Dorsolateral prefrontal cortex (tissue), 120 donors: ENCODE measurements at regions of chr1 and their contacts with region 1.

Region 1: GRCh38 chr1:233518349-233518748 is 95.6 kb upstream of the KCNK1 start:
- DNase-seq: peak in 2 of 10 donors; percentile 38 to 55
- H3K4me3 ChIP-seq: no peak overlapping the region
- H3K27ac ChIP-seq: no peak overlapping the region
- H3K27me3 ChIP-seq: no peaks in the 10 kb centered on the region
- CTCF ChIP-seq: peak; percentile 40 to 80 (median 66)

Region 2: DNA sequence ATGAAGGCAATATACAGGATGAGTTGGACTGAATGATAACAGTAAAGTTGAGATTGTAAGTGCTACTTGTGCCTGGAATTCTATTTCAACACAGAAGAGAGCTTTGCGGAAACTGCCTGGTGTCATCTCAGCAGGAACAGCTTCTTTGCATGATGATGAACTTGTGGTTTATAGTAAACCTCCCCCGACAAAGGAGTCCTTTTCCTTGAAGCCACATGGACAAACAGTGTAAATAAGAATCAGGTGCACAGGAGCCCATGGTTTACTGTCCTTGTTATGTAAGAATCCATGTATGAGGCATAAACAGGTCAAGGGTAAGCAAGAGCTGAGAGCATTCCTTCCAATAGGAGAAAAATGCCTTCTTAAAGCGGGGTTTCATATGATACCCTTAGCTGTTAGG is 289.1 kb before region 1 on chr1:
- intact Hi-C with region 1: no loop called
- DNase-seq: no peak
- H3K4me3 ChIP-seq: no peak overlapping the region
- H3K27ac ChIP-seq: no peak overlapping the region
- H3K27me3 ChIP-seq: no peaks in the 10 kb centered on the region
- CTCF ChIP-seq: no peak

Region 3: GRCh38 chr1:233613252-233614174 is 95.2 kb after region 1 on chr1 and contains the start of gene KCNK1:
- intact Hi-C with region 1: loop called in 1 of 2 experiments (anchors 5 kb)
- DNase-seq: peak; percentile 36 to 75 (median 62)
- H3K4me3 ChIP-seq: peak within 1 kb of the TSS; percentile 54 to 88 (median 76)
- H3K27ac ChIP-seq: peak within 1 kb of the TSS; percentile 11 to 92 (median 81)
- H3K27me3 ChIP-seq: peaks cover 0 to 13% (median 0%) of the 10 kb centered on the region in 45 donors
- CTCF ChIP-seq: no peak
- total RNA-seq, gene KCNK1: 32.0 to 140 (median 72.4) TPM

Region 4: DNA sequence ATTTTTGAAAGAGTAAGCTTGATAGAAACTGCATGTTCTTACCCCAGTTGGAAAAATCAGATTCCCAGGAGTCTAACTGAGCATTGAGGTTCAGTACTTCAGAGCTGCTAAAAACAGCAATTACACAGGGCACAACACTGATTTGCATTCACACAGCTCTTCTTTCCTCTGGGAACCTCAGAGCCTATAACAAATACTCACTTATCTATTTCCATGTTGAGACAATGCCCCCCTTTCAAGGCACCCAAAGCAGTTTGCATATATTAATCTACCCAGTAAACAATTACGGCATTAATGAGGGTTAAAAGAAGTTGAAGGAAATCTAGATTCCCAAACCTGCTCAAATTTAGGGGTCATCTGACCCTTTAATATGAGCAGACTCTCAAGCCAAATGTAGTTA is 259.2 kb after region 1 on chr1:
- intact Hi-C with region 1: loop called in 1 of 2 experiments (anchors 5 kb)
- DNase-seq: peak in 1 of 10 donors; percentile 32
- H3K4me3 ChIP-seq: peak overlapping the region in 15 of 59 donors; percentile 4 to 44 (median 22)
- H3K27ac ChIP-seq: peak overlapping the region; percentile 60 to 98 (median 92)
- H3K27me3 ChIP-seq: no peaks in the 10 kb centered on the region
- CTCF ChIP-seq: peak in 4 of 56 donors; percentile 6 to 16 (median 11)